ENCODE measurements at regions of chr11 and their contacts with region 1.

Region 1: GRCh38 chr11:123429913-123430720 is at the start of gene GRAMD1B:
- DNase-seq: peak; percentile 60 to 84 (median 78)
- ATAC-seq: peak; percentile 84
- H3K4me3 ChIP-seq: peak within 1 kb of the TSS; percentile 53
- H3K4me3 Mint-ChIP-seq: peak within 1 kb of the TSS; percentile 85 to 99 (median 88)
- H3K27ac ChIP-seq: peak within 1 kb of the TSS; percentile 60
- H3K27ac Mint-ChIP-seq: peak within 1 kb of the TSS; percentile 46 to 94 (median 76)
- H3K4me1 ChIP-seq: peaks cover 0 to 12% of the 10 kb centered on the region in 2 donors
- H3K4me1 Mint-ChIP-seq: peaks cover 15 to 65% (median 25%) of the 10 kb centered on the region in 7 donors
- H3K27me3 ChIP-seq: no peaks in the 10 kb centered on the region
- H3K27me3 Mint-ChIP-seq: no peaks in the 10 kb centered on the region
- total RNA-seq, gene GRAMD1B: 9.7 to 88.9 (median 14.0) TPM

Region 2: GRCh38 chr11:123261345-123262106 is 168.6 kb before region 1 on chr11:
- CTCF ChIA-PET with region 1: no interaction called
- POLR2A ChIA-PET with region 1: no interaction called
- intact Hi-C with region 1: loop called in 1 of 2 experiments (anchors 1 kb)
- DNase-seq: peak in 8 of 9 donors; percentile 23 to 70 (median 30)
- ATAC-seq: peak; percentile 84
- H3K4me3 ChIP-seq: no peak overlapping the region
- H3K4me3 Mint-ChIP-seq: peak overlapping the region in 4 of 10 donors; percentile 41 to 67 (median 44)
- H3K27ac ChIP-seq: no peak overlapping the region
- H3K27ac Mint-ChIP-seq: no peak overlapping the region
- H3K4me1 ChIP-seq: no peaks in the 10 kb centered on the region
- H3K4me1 Mint-ChIP-seq: peaks cover 0 to 17% (median 7%) of the 10 kb centered on the region in 7 donors
- H3K27me3 ChIP-seq: no peaks in the 10 kb centered on the region
- H3K27me3 Mint-ChIP-seq: peaks cover 23 to 40% (median 31%) of the 10 kb centered on the region in 5 donors

Region 3: DNA sequence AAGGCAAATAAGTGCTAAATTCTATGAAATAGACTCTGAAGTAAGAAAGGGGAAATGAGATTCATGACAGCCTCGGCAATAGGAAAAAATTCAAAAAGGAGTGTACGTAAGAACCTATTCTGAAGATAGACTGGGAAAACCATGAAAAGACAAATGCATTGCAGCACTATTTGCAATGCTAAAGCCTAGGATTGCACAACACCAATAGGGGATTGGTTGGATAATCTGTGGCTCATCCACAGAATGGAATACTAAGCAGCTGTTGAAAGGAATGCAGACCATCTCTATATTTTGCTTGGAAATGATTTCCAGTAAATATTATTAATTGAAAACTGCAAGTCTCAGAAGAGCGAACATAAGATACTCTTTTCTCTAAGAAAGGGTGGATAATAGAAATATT is 143.4 kb before region 1 on chr11:
- CTCF ChIA-PET with region 1: no interaction called
- POLR2A ChIA-PET with region 1: no interaction called
- intact Hi-C with region 1: no loop called
- DNase-seq: no peak
- ATAC-seq: no peak
- H3K4me3 ChIP-seq: no peak overlapping the region
- H3K4me3 Mint-ChIP-seq: no peak overlapping the region
- H3K27ac ChIP-seq: no peak overlapping the region
- H3K27ac Mint-ChIP-seq: no peak overlapping the region
- H3K4me1 ChIP-seq: no peaks in the 10 kb centered on the region
- H3K4me1 Mint-ChIP-seq: peaks cover 0 to 6% (median 0%) of the 10 kb centered on the region in 7 donors
- H3K27me3 ChIP-seq: no peaks in the 10 kb centered on the region
- H3K27me3 Mint-ChIP-seq: peaks cover 13 to 71% (median 28%) of the 10 kb centered on the region in 5 donors

Region 4: GRCh38 chr11:123357961-123358841 is 71.9 kb before region 1 on chr11:
- CTCF ChIA-PET with region 1: no interaction called
- POLR2A ChIA-PET with region 1: no interaction called
- intact Hi-C with region 1: loop called in 1 of 2 experiments (anchors 5 kb)
- DNase-seq: peak in 1 of 9 donors; percentile 64
- ATAC-seq: peak; percentile 59
- H3K4me3 ChIP-seq: peak overlapping the region; percentile 56
- H3K4me3 Mint-ChIP-seq: peak overlapping the region; percentile 4 to 98 (median 72)
- H3K27ac ChIP-seq: no peak overlapping the region
- H3K27ac Mint-ChIP-seq: peak overlapping the region in 1 of 9 donors; percentile 92
- H3K4me1 ChIP-seq: peaks cover 0 to 16% of the 10 kb centered on the region in 2 donors
- H3K4me1 Mint-ChIP-seq: peaks cover 8 to 61% (median 15%) of the 10 kb centered on the region in 7 donors
- H3K27me3 ChIP-seq: peaks cover 0 to 2% of the 10 kb centered on the region in 2 donors
- H3K27me3 Mint-ChIP-seq: peaks cover 0 to 55% (median 46%) of the 10 kb centered on the region in 5 donors

Region 5: GRCh38 chr11:123381817-123382554 is 48.1 kb before region 1 on chr11:
- CTCF ChIA-PET with region 1: no interaction called
- POLR2A ChIA-PET with region 1: no interaction called
- intact Hi-C with region 1: loop called in 1 of 2 experiments (anchors 2 kb)
- DNase-seq: peak in 1 of 9 donors; percentile 65
- ATAC-seq: peak; percentile 45
- H3K4me3 ChIP-seq: no peak overlapping the region
- H3K4me3 Mint-ChIP-seq: peak overlapping the region in 1 of 10 donors; percentile 77
- H3K27ac ChIP-seq: no peak overlapping the region
- H3K27ac Mint-ChIP-seq: peak overlapping the region in 1 of 9 donors; percentile 86
- H3K4me1 ChIP-seq: peaks cover 0 to 6% of the 10 kb centered on the region in 2 donors
- H3K4me1 Mint-ChIP-seq: peaks cover 0 to 48% (median 3%) of the 10 kb centered on the region in 7 donors
- H3K27me3 ChIP-seq: peaks cover 0 to 3% of the 10 kb centered on the region in 2 donors
- H3K27me3 Mint-ChIP-seq: no peaks in the 10 kb centered on the region

Region 6: DNA sequence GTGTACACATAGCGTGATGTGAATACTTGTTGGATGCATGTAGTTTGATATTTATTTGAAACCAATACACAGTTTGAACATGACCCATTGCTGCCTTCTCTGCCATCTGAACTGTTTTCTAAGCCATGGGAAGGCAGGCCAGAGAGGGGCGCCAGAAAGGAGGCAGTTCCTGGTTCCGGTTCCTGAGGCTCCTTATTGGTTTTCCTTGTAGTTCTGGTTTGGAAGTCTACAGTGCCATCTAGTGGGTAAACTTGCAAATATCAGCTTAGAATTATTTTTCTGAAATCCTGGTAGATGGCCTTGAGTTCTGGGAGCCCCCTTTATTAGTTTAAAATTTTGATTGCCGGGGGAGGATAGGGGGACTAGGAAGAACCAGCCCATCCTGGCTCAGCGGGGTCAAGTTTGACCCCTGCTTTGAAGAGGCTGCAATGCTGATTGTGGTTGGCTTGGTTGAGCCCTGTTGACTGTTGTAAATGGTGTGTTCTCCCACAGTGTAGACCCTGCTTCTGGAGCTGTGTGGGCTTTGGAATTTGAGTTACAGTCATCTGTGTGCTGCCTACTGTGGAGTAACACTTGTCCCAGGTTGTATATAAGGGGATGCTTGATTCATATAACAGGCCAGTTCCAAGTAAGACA is 48.4 kb after region 1 on chr11:
- CTCF ChIA-PET with region 1: interaction called, 5 read pairs
- POLR2A ChIA-PET with region 1: no interaction called
- intact Hi-C with region 1: loop called (anchors 1 kb)
- DNase-seq: peak in 7 of 9 donors; percentile 27 to 61 (median 50)
- ATAC-seq: peak; percentile 64
- H3K4me3 ChIP-seq: no peak overlapping the region
- H3K4me3 Mint-ChIP-seq: peak overlapping the region in 1 of 10 donors; percentile 39
- H3K27ac ChIP-seq: no peak overlapping the region
- H3K27ac Mint-ChIP-seq: peak overlapping the region in 1 of 9 donors; percentile 30
- H3K4me1 ChIP-seq: no peaks in the 10 kb centered on the region
- H3K4me1 Mint-ChIP-seq: peaks cover 0 to 59% (median 5%) of the 10 kb centered on the region in 7 donors
- H3K27me3 ChIP-seq: no peaks in the 10 kb centered on the region
- H3K27me3 Mint-ChIP-seq: no peaks in the 10 kb centered on the region

Region 7: GRCh38 chr11:123741159-123742028 is 311.3 kb after region 1 on chr11 and contains the start of gene ZNF202:
- CTCF ChIA-PET with region 1: no interaction called
- POLR2A ChIA-PET with region 1: no interaction called
- intact Hi-C with region 1: loop called (anchors 2 kb)
- DNase-seq: peak; percentile 83 to 92 (median 89)
- ATAC-seq: peak; percentile 98
- H3K4me3 ChIP-seq: peak within 1 kb of the TSS; percentile 92
- H3K4me3 Mint-ChIP-seq: peak within 1 kb of the TSS; percentile 85 to 100 (median 96)
- H3K27ac ChIP-seq: peak within 1 kb of the TSS; percentile 85
- H3K27ac Mint-ChIP-seq: peak within 1 kb of the TSS; percentile 91 to 98 (median 95)
- H3K4me1 ChIP-seq: peaks cover 19% of the 10 kb centered on the region in 2 donors
- H3K4me1 Mint-ChIP-seq: peaks cover 30 to 57% (median 46%) of the 10 kb centered on the region in 7 donors
- H3K27me3 ChIP-seq: no peaks in the 10 kb centered on the region
- H3K27me3 Mint-ChIP-seq: peaks cover 0 to 24% (median 6%) of the 10 kb centered on the region in 5 donors
- total RNA-seq, gene ZNF202: 13.0 to 27.0 (median 18.6) TPM

Measured in naive thymus-derived CD4-positive, alpha-beta T cell (primary cell).